Activated CD4-positive, alpha-beta T cell treated with anti-CD3 and anti-CD28 coated beads, Interleukin-2, amount 10 ng/mL, durations not matched to agents 24 days and 14 days (primary cell): ENCODE measurements at regions of chr19 and their contacts with region 1.

Region 1: GRCh38 chr19:15418588-15419412 is at the start of gene AKAP8L:
- DNase-seq: peak; percentile 100
- H3K4me3 Mint-ChIP-seq: peak within 1 kb of the TSS; percentile 100
- H3K27ac Mint-ChIP-seq: peak within 1 kb of the TSS; percentile 100
- H3K4me1 Mint-ChIP-seq: peaks cover 33% of the 10 kb centered on the region
- H3K27me3 Mint-ChIP-seq: no peaks in the 10 kb centered on the region
- total RNA-seq, gene AKAP8L: 76.8 and 80.1 TPM in 2 replicates

Region 2: GRCh38 chr19:15177269-15178116 is 241.3 kb before region 1 on chr19:
- intact Hi-C with region 1: loop called (anchors 5 kb)
- DNase-seq: peak; percentile 95
- H3K4me3 Mint-ChIP-seq: peak overlapping the region; percentile 48
- H3K27ac Mint-ChIP-seq: no peak overlapping the region
- H3K4me1 Mint-ChIP-seq: peaks cover 4% of the 10 kb centered on the region
- H3K27me3 Mint-ChIP-seq: peaks cover 6% of the 10 kb centered on the region

Region 3: DNA sequence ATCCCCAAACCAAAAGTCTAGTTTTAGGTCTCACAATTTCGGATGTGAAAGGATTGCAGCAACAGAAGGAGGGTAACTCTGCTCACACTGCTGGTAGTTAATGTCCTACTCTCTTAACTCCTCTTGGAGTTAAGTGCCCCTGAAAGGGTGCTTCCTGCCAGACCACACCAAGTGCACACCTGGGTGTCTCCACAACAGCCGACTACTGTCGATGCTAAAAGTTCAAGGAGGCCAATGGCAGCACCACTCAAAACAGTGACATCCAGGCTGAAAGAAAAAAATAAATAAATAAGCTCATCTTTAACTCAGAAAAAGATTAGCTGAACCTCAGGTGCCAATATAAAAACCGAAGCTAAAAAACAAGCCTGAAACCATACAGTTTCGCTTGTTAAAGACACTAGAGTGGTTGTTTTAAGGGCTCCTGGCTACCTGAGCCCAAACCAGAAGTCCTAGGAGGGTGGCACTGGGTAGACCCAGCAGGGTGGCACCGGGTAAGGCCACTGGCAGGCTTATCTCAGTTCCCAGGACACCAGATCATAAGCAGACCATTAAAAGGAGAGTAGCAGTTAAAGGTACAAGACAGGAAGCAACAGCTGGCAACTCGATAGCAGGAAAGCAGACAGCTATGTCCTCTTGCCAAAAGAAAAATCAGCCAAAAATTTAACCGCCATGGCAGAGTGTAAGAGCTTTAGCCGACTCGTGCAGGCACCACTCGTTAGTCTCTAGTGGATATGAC is 125.8 kb before region 1 on chr19:
- intact Hi-C with region 1: loop called (anchors 5 kb)
- DNase-seq: peak; percentile 69
- H3K4me3 Mint-ChIP-seq: peak overlapping the region; percentile 73
- H3K27ac Mint-ChIP-seq: peak overlapping the region; percentile 89
- H3K4me1 Mint-ChIP-seq: peaks cover 85% of the 10 kb centered on the region
- H3K27me3 Mint-ChIP-seq: no peaks in the 10 kb centered on the region

Region 4: GRCh38 chr19:15432629-15433518 is 14.1 kb after region 1 on chr19:
- intact Hi-C with region 1: loop called (anchors 1 kb)
- DNase-seq: peak; percentile 99
- H3K4me3 Mint-ChIP-seq: peak overlapping the region; percentile 97
- H3K27ac Mint-ChIP-seq: peak overlapping the region; percentile 97
- H3K4me1 Mint-ChIP-seq: peaks cover 28% of the 10 kb centered on the region
- H3K27me3 Mint-ChIP-seq: peaks cover 2% of the 10 kb centered on the region

Region 5: DNA sequence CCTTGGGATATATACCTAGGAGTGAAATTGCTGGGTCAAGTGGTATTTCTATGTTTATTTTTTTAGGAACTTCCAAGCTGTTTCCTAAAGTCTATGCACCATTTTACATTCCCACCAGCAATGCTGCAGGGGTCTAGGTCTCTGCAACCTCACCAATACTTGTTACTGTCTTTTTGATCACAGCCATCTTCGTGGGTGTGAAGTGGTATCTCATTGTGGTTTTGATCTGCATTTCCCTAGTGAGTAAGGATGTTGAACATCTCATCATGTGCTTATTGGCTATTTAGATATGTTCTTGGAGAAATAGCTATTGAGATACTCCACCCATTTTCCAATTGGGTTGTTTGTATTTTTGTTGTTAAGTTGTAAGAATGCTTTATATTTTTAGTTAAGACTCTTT is 311.7 kb after region 1 on chr19:
- intact Hi-C with region 1: no loop called
- DNase-seq: no peak
- H3K4me3 Mint-ChIP-seq: no peak overlapping the region
- H3K27ac Mint-ChIP-seq: no peak overlapping the region
- H3K4me1 Mint-ChIP-seq: no peaks in the 10 kb centered on the region
- H3K27me3 Mint-ChIP-seq: peaks cover 2% of the 10 kb centered on the region